OCI-LY7 (cell line): ENCODE measurements at regions of chr17 and their contacts with region 1.

Region 1: GRCh38 chr17:43211480-43212402 is at the start of gene TMEM106A:
- DNase-seq: peak; percentile 81
- H3K4me3 ChIP-seq: peak within 1 kb of the TSS; percentile 70
- H3K27ac ChIP-seq: peak within 1 kb of the TSS; percentile 71
- H3K4me1 ChIP-seq: peaks cover 32% of the 10 kb centered on the region
- CTCF ChIP-seq: peak; percentile 70
- total RNA-seq, gene TMEM106A: 7.1 and 9.4 TPM in 2 replicates

Region 2: DNA sequence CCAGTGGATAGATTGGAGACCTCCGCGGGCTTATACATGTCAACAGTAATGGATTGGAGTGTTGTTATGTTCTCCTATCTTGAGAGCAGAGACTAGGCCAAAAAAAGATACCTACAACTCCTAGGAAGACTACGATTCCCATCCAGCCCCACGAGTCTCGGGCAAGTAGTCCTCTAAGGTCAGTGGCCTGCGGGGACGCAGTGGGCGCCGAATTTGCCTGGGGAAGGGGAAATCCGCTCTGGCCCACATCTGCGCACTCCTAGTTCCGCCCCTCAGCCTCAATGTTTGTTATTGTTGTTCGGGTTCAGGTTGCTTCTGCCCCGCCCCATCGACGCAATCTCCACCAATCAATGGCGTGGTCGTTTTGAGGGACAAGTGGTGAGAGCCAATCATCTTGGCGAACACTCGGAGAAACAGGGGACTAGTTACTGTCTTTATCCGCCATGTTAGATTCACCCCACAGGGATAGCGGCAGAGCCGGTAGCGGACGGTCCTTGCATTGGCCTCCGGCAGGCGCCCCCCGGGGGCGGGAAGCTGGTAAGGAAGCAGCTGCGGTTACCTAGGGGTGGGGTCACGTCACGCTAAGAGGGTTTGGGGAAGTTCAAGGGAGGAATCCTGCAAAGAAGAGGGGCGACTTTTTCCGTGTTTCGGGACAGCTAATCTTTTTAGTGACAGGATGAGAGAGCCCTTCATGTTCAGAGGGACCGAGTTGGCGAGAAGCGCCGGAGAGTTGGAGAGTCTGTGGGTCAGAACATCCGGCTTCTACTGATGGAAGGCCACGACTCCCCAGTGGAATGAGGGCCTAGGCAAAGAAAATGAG is 40.8 kb before region 1 on chr17 and contains the start of gene NBR1:
- CTCF ChIA-PET with region 1: no interaction called
- POLR2A ChIA-PET with region 1: interaction called, 5 read pairs
- intact Hi-C with region 1: loop called (anchors 1 kb)
- DNase-seq: peak; percentile 99
- H3K4me3 ChIP-seq: peak within 1 kb of the TSS; percentile 82
- H3K27ac ChIP-seq: peak within 1 kb of the TSS; percentile 82
- H3K4me1 ChIP-seq: peaks cover 19% of the 10 kb centered on the region
- CTCF ChIP-seq: peak; percentile 66
- total RNA-seq, gene NBR1: 15.2 and 16.2 TPM in 2 replicates